ENCODE measurements at regions of chr5 and their contacts with region 1.

Region 1: GRCh38 chr5:151740336-151740942 is 18.0 kb downstream of the ATOX1 start:
- DNase-seq: peak; percentile 82
- H3K4me3 ChIP-seq: peak overlapping the region in 2 of 4 donors; percentile 10 to 12
- H3K27ac ChIP-seq: peak overlapping the region; percentile 74 to 83 (median 79)
- H3K4me1 ChIP-seq: peaks cover 0 to 35% (median 28%) of the 10 kb centered on the region in 4 donors
- H3K27me3 ChIP-seq: no peaks in the 10 kb centered on the region
- CTCF ChIP-seq: peak; percentile 79 to 90 (median 87)
- EP300 ChIP-seq: no peak
- POLR2A ChIP-seq: no peak

Region 2: GRCh38 chr5:151447174-151448037 is 293.0 kb before region 1 on chr5 and contains the start of gene SLC36A1:
- intact Hi-C with region 1: loop called (anchors 2 kb)
- DNase-seq: peak; percentile 97
- H3K4me3 ChIP-seq: peak within 1 kb of the TSS; percentile 69 to 84 (median 79)
- H3K27ac ChIP-seq: peak within 1 kb of the TSS; percentile 72 to 78 (median 76)
- H3K4me1 ChIP-seq: peaks cover 0 to 15% (median 10%) of the 10 kb centered on the region in 4 donors
- H3K27me3 ChIP-seq: no peaks in the 10 kb centered on the region
- CTCF ChIP-seq: peak; percentile 90 to 97 (median 96)
- EP300 ChIP-seq: no peak
- POLR2A ChIP-seq: peak in 1 of 2 donors; percentile 22
- total RNA-seq, gene SLC36A1: 6.9 to 9.7 (median 8.6) TPM

Region 3: DNA sequence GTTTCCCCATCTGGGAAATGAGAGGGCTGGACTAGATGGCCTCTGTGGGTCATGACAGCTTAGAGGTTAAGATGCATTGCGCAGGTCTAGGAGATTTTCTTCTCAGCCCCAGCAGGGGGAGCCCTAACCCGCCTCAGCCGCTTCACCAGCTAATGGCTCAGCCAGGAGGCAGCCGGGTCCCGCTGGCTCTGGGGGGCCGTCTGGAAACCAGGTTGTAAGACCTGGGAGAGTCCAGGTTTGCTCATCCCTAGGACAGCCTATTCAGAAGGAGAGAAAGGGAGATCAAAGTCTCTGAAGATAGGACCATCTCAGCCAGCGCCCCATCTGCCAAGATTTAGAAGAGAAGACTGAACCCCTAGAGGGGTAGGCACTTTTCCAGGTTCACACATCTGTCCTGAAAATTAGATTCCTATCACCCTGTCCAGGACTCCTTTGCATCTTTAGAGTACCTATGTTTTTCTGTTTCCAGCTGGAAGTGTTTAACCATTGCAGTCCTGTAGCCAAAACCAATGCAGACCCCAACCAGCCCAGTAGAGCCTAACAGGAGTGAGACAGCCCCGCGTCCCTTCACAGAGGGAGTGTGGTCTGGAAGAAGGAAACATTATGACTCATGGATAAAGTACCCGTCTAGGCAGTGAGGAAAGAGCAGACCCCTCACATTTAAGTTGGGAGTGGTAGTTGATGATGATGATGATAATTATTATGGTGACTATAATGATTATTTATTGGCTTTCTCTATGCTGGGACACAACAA is 81.3 kb before region 1 on chr5:
- intact Hi-C with region 1: loop called (anchors 1 kb)
- DNase-seq: peak; percentile 93
- H3K4me3 ChIP-seq: no peak overlapping the region
- H3K27ac ChIP-seq: peak overlapping the region in 2 of 4 donors; percentile 24 to 52
- H3K4me1 ChIP-seq: peaks cover 0 to 28% (median 18%) of the 10 kb centered on the region in 4 donors
- H3K27me3 ChIP-seq: no peaks in the 10 kb centered on the region
- CTCF ChIP-seq: peak; percentile 77 to 93 (median 88)
- EP300 ChIP-seq: no peak
- POLR2A ChIP-seq: no peak

Region 4: DNA sequence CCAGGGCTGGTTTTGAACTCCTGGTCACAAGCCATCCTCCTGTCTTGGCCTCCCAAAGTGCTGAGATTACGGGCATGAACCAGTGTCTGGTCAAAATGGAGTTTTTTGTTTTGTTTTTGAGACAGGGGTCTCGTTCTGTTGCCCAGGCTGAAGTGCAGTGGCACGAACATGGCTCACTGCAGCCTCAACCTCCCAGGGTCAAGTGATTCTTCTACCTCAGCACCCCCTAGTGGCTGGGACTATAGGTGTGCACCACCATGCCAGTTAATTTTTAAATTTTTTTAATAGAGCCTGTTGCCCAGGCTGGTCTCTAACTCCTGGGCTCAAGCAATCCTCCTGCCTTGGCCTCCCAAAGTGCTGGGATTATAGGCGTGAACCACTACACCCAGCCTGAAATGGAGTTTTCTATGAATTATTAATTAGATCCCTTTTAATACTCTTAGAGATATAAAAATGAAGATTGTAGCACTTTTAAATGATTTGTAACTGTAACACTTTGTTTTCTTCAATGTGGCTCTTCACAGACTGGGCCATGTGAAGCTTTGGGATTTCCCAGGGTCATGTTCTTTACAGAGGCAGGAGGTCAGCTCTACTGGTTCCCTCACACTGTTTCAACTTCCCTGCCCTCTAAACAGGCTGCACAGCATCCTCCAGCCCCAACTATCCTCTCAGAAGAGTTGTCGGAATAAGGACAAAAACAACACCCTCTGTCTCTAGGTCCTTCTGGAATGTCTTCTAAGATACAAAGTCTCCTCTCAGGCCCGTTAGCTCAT is 21.0 kb before region 1 on chr5:
- intact Hi-C with region 1: loop called (anchors 2 kb)
- DNase-seq: no peak
- H3K4me3 ChIP-seq: no peak overlapping the region
- H3K27ac ChIP-seq: peak overlapping the region; percentile 29 to 71 (median 40)
- H3K4me1 ChIP-seq: peaks cover 0 to 51% (median 18%) of the 10 kb centered on the region in 4 donors
- H3K27me3 ChIP-seq: no peaks in the 10 kb centered on the region
- CTCF ChIP-seq: peak; percentile 21 to 55 (median 50)
- EP300 ChIP-seq: no peak
- POLR2A ChIP-seq: no peak

Region 5: GRCh38 chr5:151771259-151772028 is 31.0 kb after region 1 on chr5 and contains the start of gene G3BP1:
- intact Hi-C with region 1: loop called (anchors 2 kb)
- DNase-seq: peak; percentile 100
- H3K4me3 ChIP-seq: peak within 1 kb of the TSS; percentile 84 to 91 (median 88)
- H3K27ac ChIP-seq: peak within 1 kb of the TSS; percentile 93 to 99 (median 98)
- H3K4me1 ChIP-seq: peaks cover 0 to 47% (median 43%) of the 10 kb centered on the region in 4 donors
- H3K27me3 ChIP-seq: no peaks in the 10 kb centered on the region
- CTCF ChIP-seq: peak in 2 of 4 experiments; percentile 18 to 49
- EP300 ChIP-seq: no peak
- POLR2A ChIP-seq: peak; percentile 96 to 98
- total RNA-seq, gene G3BP1: 68.5 to 158 (median 72.2) TPM